Common myeloid progenitor, CD34-positive (primary cell): ENCODE measurements at regions of chr9 and their contacts with region 1.

Region 1: DNA sequence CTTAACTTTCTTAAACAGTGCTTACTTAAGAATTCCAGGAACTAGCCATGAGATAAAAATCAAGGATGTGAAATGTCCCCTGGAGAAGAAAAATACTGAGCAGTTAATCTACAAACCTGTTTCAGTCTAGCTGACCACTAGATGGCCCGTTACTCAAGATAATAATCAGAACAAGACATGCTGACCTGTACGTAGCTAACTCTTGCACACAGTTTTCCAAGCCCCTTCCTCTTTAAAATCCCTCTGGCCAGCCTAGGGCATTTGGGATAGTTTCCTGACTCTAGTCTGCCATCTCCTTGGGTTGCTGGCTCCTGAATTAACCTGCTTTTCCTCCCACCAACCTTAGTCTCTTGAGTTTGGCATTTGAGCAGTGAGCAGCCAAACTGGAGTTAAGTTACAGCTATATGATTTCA is 59.2 kb upstream of the TRAF1 start:
- DNase-seq: peak; percentile 25 to 47 (median 44)
- H3K4me3 ChIP-seq: no peak overlapping the region
- H3K27ac ChIP-seq: no peak overlapping the region
- H3K4me1 ChIP-seq: peaks cover 0 to 2% (median 0%) of the 10 kb centered on the region in 4 experiments
- H3K27me3 ChIP-seq: no peaks in the 10 kb centered on the region

Region 2: DNA sequence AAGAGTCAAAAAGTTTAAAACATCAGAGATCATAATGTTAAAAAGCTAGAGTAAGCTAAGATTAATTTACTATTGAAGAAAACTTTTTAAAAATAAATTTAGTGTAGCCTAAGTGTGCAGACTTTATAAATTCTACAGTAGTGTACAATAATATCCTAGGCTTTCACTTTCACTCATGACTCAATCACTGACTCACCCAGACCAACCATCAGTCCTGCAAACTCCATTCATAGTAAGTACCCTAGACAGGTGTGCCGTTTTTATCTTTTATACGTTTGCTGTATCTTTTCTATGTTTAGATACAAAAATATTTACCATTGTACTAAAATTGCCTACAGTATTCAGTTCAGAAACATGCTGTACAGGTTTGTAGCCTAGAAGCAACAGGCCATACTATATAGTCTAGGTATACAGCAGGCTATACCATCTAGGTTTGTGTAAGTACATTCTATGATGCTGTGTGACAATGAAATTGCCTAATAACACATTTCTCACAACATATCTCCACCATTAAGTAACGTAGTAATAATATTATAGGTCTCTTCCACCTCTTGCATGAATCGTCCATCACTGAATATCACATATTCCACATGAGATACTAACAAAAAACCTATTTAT is 330.7 kb before region 1 on chr9:
- CTCF ChIA-PET with region 1: no interaction called
- POLR2A ChIA-PET with region 1: no interaction called
- DNase-seq: peak in 1 of 3 donors; percentile 31
- H3K4me3 ChIP-seq: no peak overlapping the region
- H3K27ac ChIP-seq: no peak overlapping the region
- H3K4me1 ChIP-seq: peaks cover 0 to 4% (median 3%) of the 10 kb centered on the region in 4 experiments
- H3K27me3 ChIP-seq: no peaks in the 10 kb centered on the region

Region 3: DNA sequence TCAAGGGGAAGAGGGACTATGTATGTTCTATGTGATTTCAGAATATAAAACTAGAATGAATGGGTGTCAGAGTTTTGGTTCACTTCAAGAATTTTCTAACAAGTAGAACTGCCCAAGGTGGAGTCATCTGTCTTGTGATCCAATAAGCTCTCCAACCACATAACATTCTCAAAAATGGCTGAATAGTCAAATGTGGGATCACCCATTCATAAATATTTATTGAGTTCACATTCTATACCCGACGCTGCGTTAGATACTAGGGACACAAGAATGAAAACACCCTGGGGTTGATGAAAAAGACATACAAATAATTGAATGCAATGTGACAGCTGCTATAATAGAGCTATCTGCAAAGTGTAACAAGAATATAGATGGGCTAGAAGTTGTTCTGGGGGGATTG is 23.9 kb before region 1 on chr9:
- CTCF ChIA-PET with region 1: interaction called, 14 read pairs
- POLR2A ChIA-PET with region 1: no interaction called
- DNase-seq: no peak
- H3K4me3 ChIP-seq: no peak overlapping the region
- H3K27ac ChIP-seq: no peak overlapping the region
- H3K4me1 ChIP-seq: no peaks in the 10 kb centered on the region
- H3K27me3 ChIP-seq: no peaks in the 10 kb centered on the region

Region 4: GRCh38 chr9:121071756-121072421 is 86.1 kb after region 1 on chr9:
- CTCF ChIA-PET with region 1: interaction called, 16 read pairs
- POLR2A ChIA-PET with region 1: no interaction called
- DNase-seq: peak; percentile 81 to 88 (median 82)
- H3K4me3 ChIP-seq: peak overlapping the region in 6 of 7 experiments; percentile 69 to 83 (median 74)
- H3K27ac ChIP-seq: peak overlapping the region; percentile 79 to 83
- H3K4me1 ChIP-seq: peaks cover 19 to 55% (median 34%) of the 10 kb centered on the region in 4 experiments
- H3K27me3 ChIP-seq: no peaks in the 10 kb centered on the region